ENCODE measurements at regions of chr3 and their contacts with region 1.

Region 1: DNA sequence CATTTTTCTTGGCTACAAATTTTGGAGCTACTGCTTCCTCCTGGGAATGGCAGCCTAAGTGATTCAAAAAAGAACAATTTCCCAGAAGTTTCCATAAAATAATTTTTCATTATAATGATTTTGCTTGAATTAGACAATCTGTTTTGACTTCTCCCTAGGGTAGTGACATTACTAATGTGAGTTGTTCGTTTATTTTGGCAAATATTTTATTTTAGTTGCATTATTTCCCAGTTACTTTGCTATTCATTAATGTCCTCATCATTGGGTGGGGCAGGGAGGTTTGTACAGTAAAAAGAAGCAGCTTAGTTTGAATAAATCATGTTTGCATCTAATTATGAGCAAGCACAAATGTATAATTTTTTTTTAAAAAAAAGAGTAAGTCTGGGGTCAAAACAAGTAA is 686.6 kb downstream of the ROBO2 start:
- DNase-seq: no peak
- H3K4me3 ChIP-seq: no peak overlapping the region
- H3K27ac ChIP-seq: no peak overlapping the region
- H3K4me1 ChIP-seq: no peaks in the 10 kb centered on the region
- H3K27me3 ChIP-seq: no peaks in the 10 kb centered on the region
- CTCF ChIP-seq: no peak

Region 2: DNA sequence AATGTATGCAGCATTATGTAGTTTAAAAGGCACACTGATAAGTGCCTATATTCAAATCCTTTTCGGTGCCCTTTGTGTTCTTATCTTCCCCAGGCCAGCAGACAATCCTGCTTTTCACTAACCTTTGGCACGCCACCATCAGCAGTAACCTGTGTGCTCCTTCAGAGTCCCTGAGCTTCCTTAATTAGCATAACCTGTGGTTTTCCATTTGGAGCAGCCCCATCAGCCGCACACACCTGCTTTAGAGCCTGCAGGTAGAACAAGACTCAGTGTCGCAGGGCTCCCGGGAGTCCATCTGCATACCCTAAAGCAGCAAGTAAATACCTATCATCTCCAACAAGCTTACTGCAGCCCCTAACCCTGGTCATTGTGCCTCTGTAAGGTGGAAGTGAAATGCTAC is 68.5 kb after region 1 on chr3:
- CTCF ChIA-PET with region 1: no interaction called
- dilution Hi-C with region 1: loop called (anchors 10 kb)
- in situ Hi-C with region 1: no loop called
- intact Hi-C with region 1: no loop called
- DNase-seq: no peak
- H3K4me3 ChIP-seq: no peak overlapping the region
- H3K27ac ChIP-seq: no peak overlapping the region
- H3K4me1 ChIP-seq: no peaks in the 10 kb centered on the region
- H3K27me3 ChIP-seq: peaks cover 3% of the 10 kb centered on the region
- CTCF ChIP-seq: no peak